ENCODE measurements at regions of chr1 and their contacts with region 1.

Region 1: DNA sequence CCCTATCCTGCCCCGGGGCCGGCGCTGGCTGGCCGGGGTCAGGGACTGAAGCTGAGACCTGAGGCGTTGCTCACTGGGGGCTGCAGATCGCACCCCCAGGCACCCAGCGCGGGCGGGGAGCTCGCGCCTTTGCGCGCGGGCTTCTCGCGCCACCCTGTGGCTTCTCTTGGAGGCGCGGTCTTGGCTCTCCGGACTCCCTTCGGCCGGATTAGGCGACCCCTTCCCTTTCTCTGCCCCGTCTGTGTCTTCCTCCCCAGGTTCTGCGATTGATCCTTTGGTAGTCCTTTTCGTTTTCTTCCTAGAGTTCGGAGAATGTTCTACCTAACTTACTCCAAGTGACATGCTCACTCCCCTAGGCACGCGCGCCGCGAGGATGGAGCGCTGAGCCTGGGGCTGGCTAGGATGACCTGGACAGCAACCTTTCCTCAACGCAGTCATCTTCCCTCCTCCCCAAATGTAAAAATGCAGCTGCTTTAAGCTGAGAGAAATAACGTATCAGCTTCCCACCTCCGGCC is 495 bp upstream of the NTRK1 start:
- DNase-seq: peak; percentile 69
- ATAC-seq: peak; percentile 65
- H3K4me3 Mint-ChIP-seq: peak overlapping the region; percentile 72
- H3K27ac Mint-ChIP-seq: no peak overlapping the region
- H3K4me1 Mint-ChIP-seq: peaks cover 43% of the 10 kb centered on the region
- H3K27me3 Mint-ChIP-seq: peaks cover 42% of the 10 kb centered on the region

Region 2: GRCh38 chr1:156740679-156741612 is 119.2 kb before region 1 on chr1 and contains the start of gene MRPL24:
- CTCF ChIA-PET with region 1: interaction called, 17 read pairs
- DNase-seq: peak; percentile 99
- ATAC-seq: peak; percentile 91
- H3K4me3 Mint-ChIP-seq: peak within 1 kb of the TSS; percentile 95
- H3K27ac Mint-ChIP-seq: peak within 1 kb of the TSS; percentile 96
- H3K4me1 Mint-ChIP-seq: peaks cover 61% of the 10 kb centered on the region
- H3K27me3 Mint-ChIP-seq: no peaks in the 10 kb centered on the region
- total RNA-seq, gene MRPL24: 60.4 to 80.0 TPM

Region 3: DNA sequence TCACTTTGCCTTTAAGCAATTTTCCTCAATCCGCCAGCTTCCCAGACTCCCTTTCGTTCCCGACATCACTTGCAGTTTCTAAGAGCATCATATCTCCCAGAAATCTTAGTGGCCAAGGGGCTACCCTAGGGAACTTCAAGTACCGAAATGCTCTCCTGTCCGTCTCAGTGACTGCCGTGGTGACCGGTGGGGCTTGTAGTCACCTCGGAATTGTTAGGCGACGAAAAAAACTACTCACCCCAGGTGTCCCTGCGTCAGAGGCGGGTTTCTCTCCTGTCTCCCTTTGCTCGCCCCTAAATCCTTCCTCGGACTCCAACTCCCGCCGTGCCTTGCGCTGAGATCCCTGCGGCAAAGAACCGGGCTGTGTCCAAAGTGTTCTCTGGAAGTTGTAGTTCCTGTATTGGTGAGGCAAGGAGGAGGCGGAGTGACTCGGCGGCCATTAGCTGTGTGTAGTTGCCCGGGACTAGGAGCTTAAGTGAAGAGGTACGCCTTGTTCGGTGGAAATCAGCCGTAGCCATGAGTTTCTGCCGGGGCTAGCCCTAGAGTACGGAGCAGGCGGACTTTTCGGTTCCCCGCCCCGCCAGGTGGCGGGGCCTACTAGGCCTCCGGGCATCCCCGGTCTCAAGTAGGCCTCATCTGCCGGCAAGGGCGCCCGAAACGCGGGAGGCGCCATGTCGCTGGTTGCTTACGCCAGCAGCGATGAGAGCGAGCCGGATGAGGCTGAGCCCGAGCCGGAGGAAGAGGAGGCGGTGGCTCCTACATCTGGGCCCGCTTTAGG is 92.9 kb before region 1 on chr1 and contains the start of gene PRCC:
- CTCF ChIA-PET with region 1: interaction called, 28 read pairs
- DNase-seq: peak; percentile 100
- ATAC-seq: peak; percentile 95
- H3K4me3 Mint-ChIP-seq: no peak within 1 kb of the TSS
- H3K27ac Mint-ChIP-seq: no peak within 1 kb of the TSS
- H3K4me1 Mint-ChIP-seq: peaks cover 41% of the 10 kb centered on the region
- H3K27me3 Mint-ChIP-seq: no peaks in the 10 kb centered on the region
- total RNA-seq, gene PRCC: 68.7 to 99.8 TPM

Region 4: GRCh38 chr1:156797212-156797871 is 62.8 kb before region 1 on chr1:
- CTCF ChIA-PET with region 1: interaction called, 600 read pairs
- DNase-seq: peak; percentile 76
- ATAC-seq: peak; percentile 77
- H3K4me3 Mint-ChIP-seq: no peak overlapping the region
- H3K27ac Mint-ChIP-seq: peak overlapping the region; percentile 10
- H3K4me1 Mint-ChIP-seq: peaks cover 30% of the 10 kb centered on the region
- H3K27me3 Mint-ChIP-seq: no peaks in the 10 kb centered on the region

Region 5: DNA sequence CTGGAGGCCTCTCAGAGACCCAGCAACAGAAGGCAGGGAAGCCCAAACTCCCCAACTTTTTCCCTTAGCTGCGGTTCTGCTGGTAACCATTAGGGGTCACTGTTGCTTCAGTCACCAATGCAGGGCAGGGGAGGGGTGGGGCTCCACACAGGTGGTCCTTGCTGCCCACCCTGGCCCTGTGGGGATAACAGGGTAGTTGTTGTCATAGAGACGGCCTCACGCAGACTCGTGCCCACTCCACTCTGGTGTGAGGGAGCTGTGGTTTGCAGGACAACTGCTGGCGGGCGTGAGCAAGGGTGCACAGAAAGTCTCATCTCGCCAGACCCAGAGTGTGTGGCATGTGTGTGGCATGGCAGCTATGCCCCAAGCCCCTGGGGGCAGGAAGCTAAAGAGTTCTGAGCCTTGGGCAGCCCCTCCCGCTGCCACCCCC is 21.2 kb before region 1 on chr1:
- CTCF ChIA-PET with region 1: interaction called, 233 read pairs
- DNase-seq: peak; percentile 66
- ATAC-seq: peak; percentile 60
- H3K4me3 Mint-ChIP-seq: no peak overlapping the region
- H3K27ac Mint-ChIP-seq: no peak overlapping the region
- H3K4me1 Mint-ChIP-seq: peaks cover 37% of the 10 kb centered on the region
- H3K27me3 Mint-ChIP-seq: peaks cover 28% of the 10 kb centered on the region

Region 6: GRCh38 chr1:156892190-156893047 is 32.2 kb after region 1 on chr1:
- CTCF ChIA-PET with region 1: interaction called, 105 read pairs
- DNase-seq: peak; percentile 91
- ATAC-seq: peak; percentile 97
- H3K4me3 Mint-ChIP-seq: peak overlapping the region; percentile 39
- H3K27ac Mint-ChIP-seq: no peak overlapping the region
- H3K4me1 Mint-ChIP-seq: peaks cover 12% of the 10 kb centered on the region
- H3K27me3 Mint-ChIP-seq: peaks cover 68% of the 10 kb centered on the region

Region 7: DNA sequence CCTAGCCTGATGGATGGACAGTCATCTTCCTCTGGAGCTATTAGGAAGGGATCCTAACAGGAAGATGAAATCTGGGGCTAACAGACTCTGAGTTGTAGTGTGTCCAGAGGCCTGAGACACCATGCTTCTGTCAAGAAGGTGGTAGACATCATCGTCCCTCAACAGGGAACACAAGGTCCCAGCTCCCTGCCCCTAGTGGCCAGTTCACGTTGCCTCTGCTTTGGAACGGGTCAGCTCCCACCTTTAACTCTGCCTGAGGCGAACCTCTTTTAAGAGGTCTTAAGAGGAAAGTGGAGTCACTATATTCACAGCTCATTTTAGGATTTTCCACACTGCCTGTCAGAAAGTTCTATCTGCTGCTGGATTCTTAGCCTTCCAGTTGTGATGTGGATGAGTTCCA is 88.5 kb after region 1 on chr1:
- CTCF ChIA-PET with region 1: no interaction called
- DNase-seq: no peak
- ATAC-seq: no peak
- H3K4me3 Mint-ChIP-seq: no peak overlapping the region
- H3K27ac Mint-ChIP-seq: no peak overlapping the region
- H3K4me1 Mint-ChIP-seq: no peaks in the 10 kb centered on the region
- H3K27me3 Mint-ChIP-seq: peaks cover 7% of the 10 kb centered on the region

Measured in activated CD8-positive, alpha-beta memory T cell treated with anti-CD3 and anti-CD28 coated beads, Interleukin-2, amount 10 ng/mL, durations not matched to agents 7 days and 5 days (primary cell).